GM10248 (cell line): ENCODE measurements at regions of chr10 and their contacts with region 1.

Region 1: GRCh38 chr10:106134326-106135000 is 1030.0 kb downstream of the SORCS1 start:
- DNase-seq: no peak
- CTCF ChIP-seq: no peak

Region 2: DNA sequence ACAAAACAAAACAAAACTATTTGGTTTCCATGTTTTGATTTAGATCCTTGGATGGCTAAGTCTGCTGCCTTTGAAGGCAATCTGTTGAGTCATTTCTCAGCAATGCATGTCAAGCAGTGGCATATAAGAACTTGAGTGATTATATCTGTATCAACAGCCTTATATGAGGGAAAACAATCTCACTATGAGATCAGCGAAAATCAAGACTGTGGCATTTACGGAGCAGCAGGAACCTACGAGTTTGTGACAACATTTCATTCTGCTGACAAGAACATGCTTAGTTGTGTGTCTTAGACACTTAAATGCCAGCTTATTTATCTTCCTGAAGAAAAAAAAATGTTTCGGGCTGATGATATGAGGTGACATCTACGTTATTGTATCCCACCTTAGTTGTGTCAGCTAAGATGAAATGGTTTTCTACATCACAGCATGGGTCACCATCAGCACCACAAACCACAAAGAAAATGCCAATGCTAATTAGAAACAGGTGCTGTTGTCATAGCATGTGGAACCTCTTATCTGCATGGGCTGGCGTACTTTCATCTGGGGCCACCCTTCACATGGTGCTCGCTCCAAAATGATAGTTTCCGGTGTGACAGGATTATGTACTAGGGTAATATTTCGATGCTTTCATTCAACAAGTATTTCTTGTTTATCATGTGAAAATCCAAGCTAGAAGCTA is 55.4 kb before region 1 on chr10:
- CTCF ChIA-PET with region 1: no interaction called
- POLR2A ChIA-PET with region 1: no interaction called
- DNase-seq: no peak
- CTCF ChIP-seq: no peak

Region 3: GRCh38 chr10:106111246-106111645 is 23.2 kb before region 1 on chr10:
- CTCF ChIA-PET with region 1: no interaction called
- POLR2A ChIA-PET with region 1: no interaction called
- DNase-seq: no peak
- CTCF ChIP-seq: no peak

Region 4: GRCh38 chr10:106254071-106254470 is 119.6 kb after region 1 on chr10:
- CTCF ChIA-PET with region 1: no interaction called
- POLR2A ChIA-PET with region 1: interaction called, 11 read pairs
- DNase-seq: no peak
- CTCF ChIP-seq: no peak